ENCODE measurements at regions of chr3 and their contacts with region 1.

Region 1: GRCh38 chr3:48188266-48189201 is at the start of gene CDC25A:
- DNase-seq: peak; percentile 83 to 98 (median 89)
- ATAC-seq: peak; percentile 99
- H3K4me3 ChIP-seq: peak within 1 kb of the TSS; percentile 92
- H3K4me3 Mint-ChIP-seq: peak within 1 kb of the TSS; percentile 93
- H3K27ac ChIP-seq: peak within 1 kb of the TSS in 1 of 2 donors; percentile 48
- H3K27ac Mint-ChIP-seq: peak within 1 kb of the TSS; percentile 35
- H3K4me1 ChIP-seq: peaks cover 18% of the 10 kb centered on the region
- H3K4me1 Mint-ChIP-seq: peaks cover 19% of the 10 kb centered on the region
- H3K27me3 ChIP-seq: peaks cover 0 to 9% of the 10 kb centered on the region in 2 experiments
- H3K27me3 Mint-ChIP-seq: peaks cover 27% of the 10 kb centered on the region
- CTCF ChIP-seq: no peak
- total RNA-seq, gene CDC25A: 0.14 TPM in 1 of 2 experiments, not detected in the other

Region 2: DNA sequence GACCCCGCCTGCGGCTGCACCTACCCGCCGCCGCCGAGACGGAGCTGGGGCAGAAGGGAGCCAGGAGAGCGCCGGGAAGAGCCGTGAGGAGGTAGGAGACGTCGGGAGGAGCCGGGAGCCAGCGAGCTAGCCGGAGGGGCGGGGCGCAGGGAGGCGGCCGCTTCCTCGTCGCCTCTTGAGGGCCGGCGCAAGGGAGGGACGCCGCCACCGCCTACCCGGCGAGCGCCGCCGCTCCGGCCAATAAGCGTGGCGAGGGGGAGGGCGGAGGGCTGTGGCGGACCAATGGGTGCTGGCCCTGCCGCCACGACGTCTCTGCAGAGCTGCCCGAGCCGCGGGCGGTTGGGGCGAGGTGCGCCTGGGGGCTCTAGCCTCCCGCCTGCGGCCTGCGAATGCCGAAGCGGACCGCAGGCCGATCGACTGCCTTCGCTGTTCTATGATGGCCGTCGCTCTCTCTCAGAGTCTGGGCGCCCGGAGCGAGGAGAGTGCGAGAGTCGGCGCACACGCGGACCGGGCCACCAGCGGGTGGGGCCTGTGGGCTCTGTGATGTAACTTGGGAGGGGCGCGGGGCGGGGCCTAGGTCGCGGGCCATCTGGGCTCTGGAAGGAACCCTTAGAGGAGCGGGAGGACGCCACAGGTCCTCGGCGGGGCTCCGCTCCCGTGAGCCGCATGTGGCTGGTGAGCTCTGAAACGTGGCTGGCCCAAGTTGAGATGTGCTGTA is 99.6 kb before region 1 on chr3:
- CTCF ChIA-PET with region 1: no interaction called
- POLR2A ChIA-PET with region 1: no interaction called
- intact Hi-C with region 1: loop called in 1 of 2 experiments (anchors 2 kb)
- DNase-seq: peak; percentile 83 to 97 (median 93)
- ATAC-seq: peak; percentile 90
- H3K4me3 ChIP-seq: peak overlapping the region; percentile 82
- H3K4me3 Mint-ChIP-seq: peak overlapping the region; percentile 97
- H3K27ac ChIP-seq: peak overlapping the region; percentile 80 to 81
- H3K27ac Mint-ChIP-seq: peak overlapping the region; percentile 95
- H3K4me1 ChIP-seq: peaks cover 19% of the 10 kb centered on the region
- H3K4me1 Mint-ChIP-seq: peaks cover 35% of the 10 kb centered on the region
- H3K27me3 ChIP-seq: no peaks in the 10 kb centered on the region
- H3K27me3 Mint-ChIP-seq: no peaks in the 10 kb centered on the region
- CTCF ChIP-seq: no peak

Region 3: DNA sequence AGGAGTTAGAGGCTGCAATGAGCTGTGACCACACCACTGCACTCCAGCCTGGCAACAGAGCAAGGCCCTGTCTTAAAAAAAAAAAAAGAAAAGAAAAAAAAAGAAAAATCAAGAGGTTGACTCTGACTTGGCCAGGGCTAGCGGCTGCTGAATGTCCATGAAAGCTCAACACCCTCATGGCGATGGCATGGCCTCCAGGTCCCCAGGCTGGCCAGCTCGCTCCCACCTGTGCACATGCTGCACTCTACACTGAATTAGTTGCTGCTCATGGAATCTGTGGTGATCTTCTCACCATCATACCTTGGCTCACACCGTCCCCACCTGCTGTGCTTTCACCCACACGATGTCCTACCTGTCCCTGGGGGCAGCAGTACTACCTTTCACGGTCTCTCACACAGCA is 11.4 kb after region 1 on chr3:
- CTCF ChIA-PET with region 1: no interaction called
- POLR2A ChIA-PET with region 1: no interaction called
- intact Hi-C with region 1: no loop called
- DNase-seq: no peak
- ATAC-seq: no peak
- H3K4me3 ChIP-seq: no peak overlapping the region
- H3K4me3 Mint-ChIP-seq: no peak overlapping the region
- H3K27ac ChIP-seq: no peak overlapping the region
- H3K27ac Mint-ChIP-seq: no peak overlapping the region
- H3K4me1 ChIP-seq: no peaks in the 10 kb centered on the region
- H3K4me1 Mint-ChIP-seq: no peaks in the 10 kb centered on the region
- H3K27me3 ChIP-seq: no peaks in the 10 kb centered on the region
- H3K27me3 Mint-ChIP-seq: peaks cover 4% of the 10 kb centered on the region
- CTCF ChIP-seq: no peak

Region 4: GRCh38 chr3:48215466-48215865 is 26.9 kb after region 1 on chr3:
- CTCF ChIA-PET with region 1: no interaction called
- POLR2A ChIA-PET with region 1: no interaction called
- intact Hi-C with region 1: no loop called
- DNase-seq: no peak
- ATAC-seq: no peak
- H3K4me3 ChIP-seq: no peak overlapping the region
- H3K4me3 Mint-ChIP-seq: no peak overlapping the region
- H3K27ac ChIP-seq: no peak overlapping the region
- H3K27ac Mint-ChIP-seq: no peak overlapping the region
- H3K4me1 ChIP-seq: no peaks in the 10 kb centered on the region
- H3K4me1 Mint-ChIP-seq: no peaks in the 10 kb centered on the region
- H3K27me3 ChIP-seq: no peaks in the 10 kb centered on the region
- H3K27me3 Mint-ChIP-seq: no peaks in the 10 kb centered on the region
- CTCF ChIP-seq: no peak

Region 5: DNA sequence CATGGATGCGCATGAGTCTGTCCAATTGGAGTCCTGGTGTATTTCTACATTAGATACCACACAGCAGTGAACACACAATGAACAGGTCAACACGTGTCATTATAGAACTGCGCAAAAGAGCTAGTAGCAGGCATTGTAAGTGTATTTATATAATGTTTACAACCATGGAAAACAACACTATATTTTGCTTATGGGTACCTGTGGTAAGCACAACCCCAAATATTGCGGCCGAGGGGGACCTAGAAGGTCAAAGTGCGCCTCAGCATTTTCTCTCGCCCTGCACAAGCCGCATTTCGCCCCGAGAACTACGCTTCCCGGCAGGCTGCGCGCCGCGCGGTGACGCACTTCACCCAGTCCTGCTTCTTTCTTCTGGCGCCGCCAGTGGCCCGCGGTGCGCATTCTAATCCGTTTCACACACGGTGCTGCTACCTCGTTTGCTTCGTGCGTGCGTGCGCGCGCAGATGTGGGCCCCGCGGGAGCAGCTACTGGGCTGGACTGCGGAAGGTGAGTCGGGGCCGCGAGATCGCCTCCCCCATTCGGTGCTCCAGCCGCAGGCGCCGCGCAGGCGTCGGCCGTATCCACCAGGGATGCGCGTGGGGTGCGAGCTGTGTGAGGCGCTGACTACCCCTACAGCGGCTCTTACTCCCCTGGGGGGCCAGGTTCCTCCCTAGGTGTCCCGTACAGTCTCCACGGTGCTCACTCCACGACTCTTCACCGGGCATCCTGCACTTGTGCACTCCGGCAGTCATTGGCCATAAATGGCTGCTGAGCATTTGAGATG is 52.4 kb after region 1 on chr3 and contains the start of gene ZNF589:
- CTCF ChIA-PET with region 1: interaction called, 8 read pairs
- POLR2A ChIA-PET with region 1: interaction called, 3 read pairs
- intact Hi-C with region 1: loop called (anchors 1 to 10 kb)
- DNase-seq: peak; percentile 89 to 98 (median 94)
- ATAC-seq: peak; percentile 98
- H3K4me3 ChIP-seq: peak within 1 kb of the TSS; percentile 93
- H3K4me3 Mint-ChIP-seq: peak within 1 kb of the TSS; percentile 93
- H3K27ac ChIP-seq: peak within 1 kb of the TSS; percentile 85
- H3K27ac Mint-ChIP-seq: peak within 1 kb of the TSS; percentile 92
- H3K4me1 ChIP-seq: peaks cover 33% of the 10 kb centered on the region
- H3K4me1 Mint-ChIP-seq: peaks cover 23% of the 10 kb centered on the region
- H3K27me3 ChIP-seq: no peaks in the 10 kb centered on the region
- H3K27me3 Mint-ChIP-seq: no peaks in the 10 kb centered on the region
- CTCF ChIP-seq: no peak
- total RNA-seq, gene ZNF589: 18.3 to 20.5 TPM

Region 6: DNA sequence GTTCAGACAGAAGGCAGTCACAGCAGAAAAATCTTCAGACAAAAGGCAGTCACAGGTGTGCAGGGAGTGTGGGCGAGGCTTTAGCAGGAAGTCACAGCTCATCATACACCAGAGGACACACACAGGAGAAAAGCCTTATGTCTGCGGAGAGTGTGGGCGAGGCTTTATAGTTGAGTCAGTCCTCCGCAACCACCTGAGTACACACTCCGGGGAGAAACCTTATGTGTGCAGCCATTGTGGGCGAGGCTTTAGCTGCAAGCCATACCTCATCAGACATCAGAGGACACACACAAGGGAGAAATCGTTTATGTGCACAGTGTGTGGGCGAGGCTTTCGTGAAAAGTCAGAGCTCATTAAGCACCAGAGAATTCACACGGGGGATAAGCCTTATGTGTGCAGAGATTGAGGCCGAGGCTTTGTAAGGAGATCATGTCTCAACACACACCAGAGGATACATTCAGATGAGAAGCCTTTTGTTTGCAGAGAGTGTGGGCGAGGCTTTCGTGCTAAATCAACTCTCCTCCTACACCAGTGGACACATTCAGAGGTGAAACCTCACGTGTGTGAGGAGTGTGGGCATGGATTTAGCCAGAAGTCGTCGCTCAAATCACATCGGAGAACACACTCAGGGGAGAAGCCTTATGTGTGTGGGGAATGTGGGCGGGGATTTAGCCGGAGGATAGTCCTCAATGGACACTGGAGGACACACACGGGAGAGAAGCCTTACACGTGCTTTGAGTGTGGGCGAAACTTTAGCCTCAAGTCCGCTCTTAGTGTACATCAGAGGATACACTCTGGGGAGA is 80.0 kb after region 1 on chr3:
- CTCF ChIA-PET with region 1: interaction called, 4 read pairs
- POLR2A ChIA-PET with region 1: no interaction called
- intact Hi-C with region 1: loop called in 1 of 2 experiments (anchors 2 kb)
- DNase-seq: peak; percentile 55 to 90 (median 76)
- ATAC-seq: peak; percentile 95
- H3K4me3 ChIP-seq: peak overlapping the region; percentile 28
- H3K4me3 Mint-ChIP-seq: peak overlapping the region; percentile 74
- H3K27ac ChIP-seq: peak overlapping the region; percentile 57 to 67
- H3K27ac Mint-ChIP-seq: peak overlapping the region; percentile 87
- H3K4me1 ChIP-seq: peaks cover 29% of the 10 kb centered on the region
- H3K4me1 Mint-ChIP-seq: peaks cover 38% of the 10 kb centered on the region
- H3K27me3 ChIP-seq: no peaks in the 10 kb centered on the region
- H3K27me3 Mint-ChIP-seq: no peaks in the 10 kb centered on the region
- CTCF ChIP-seq: no peak

Region 7: DNA sequence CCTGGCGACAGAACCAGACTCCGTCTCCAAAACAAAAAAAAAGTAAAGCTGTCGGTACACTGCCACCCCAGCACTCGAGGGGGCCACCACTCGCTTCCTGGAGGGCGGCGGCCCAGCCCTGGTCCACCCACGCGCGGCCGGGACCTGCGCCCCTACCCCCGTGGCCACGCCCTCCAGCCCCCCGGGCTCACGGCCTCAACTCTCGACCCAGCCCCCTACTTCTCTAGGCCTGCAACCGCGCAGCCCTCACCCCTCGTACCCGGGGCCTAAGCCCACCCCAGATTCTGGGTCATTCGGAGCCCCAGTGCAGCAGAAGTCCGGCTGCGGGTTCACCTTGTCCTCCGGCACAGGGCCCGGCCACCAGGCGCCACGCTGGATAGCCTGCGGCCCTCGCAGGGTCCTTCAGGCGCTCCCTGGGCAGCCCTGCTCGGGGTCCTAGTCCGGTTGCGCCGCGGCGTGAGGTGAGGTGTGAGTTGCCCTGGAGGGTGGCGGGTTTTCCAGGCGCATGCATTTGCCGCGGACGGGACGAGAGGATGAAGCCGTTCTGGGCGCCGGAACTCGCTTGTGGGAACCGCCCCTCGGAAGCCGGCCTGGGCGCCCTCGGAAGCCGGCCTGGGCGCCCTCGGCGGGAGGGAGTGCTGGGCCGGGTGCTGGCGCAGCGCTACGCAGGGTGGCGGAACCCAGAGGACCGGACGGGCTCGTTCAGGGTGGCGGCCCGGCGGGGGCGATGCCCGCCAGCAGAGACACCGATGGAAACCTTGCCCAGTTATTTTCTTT is 112.7 kb after region 1 on chr3:
- CTCF ChIA-PET with region 1: no interaction called
- POLR2A ChIA-PET with region 1: no interaction called
- intact Hi-C with region 1: loop called in 1 of 2 experiments (anchors 2 kb)
- DNase-seq: peak; percentile 75 to 94 (median 89)
- ATAC-seq: peak; percentile 82
- H3K4me3 ChIP-seq: peak within 1 kb of the TSS; percentile 87
- H3K4me3 Mint-ChIP-seq: peak within 1 kb of the TSS; percentile 93
- H3K27ac ChIP-seq: peak within 1 kb of the TSS; percentile 84
- H3K27ac Mint-ChIP-seq: peak within 1 kb of the TSS; percentile 86
- H3K4me1 ChIP-seq: peaks cover 21% of the 10 kb centered on the region
- H3K4me1 Mint-ChIP-seq: peaks cover 48% of the 10 kb centered on the region
- H3K27me3 ChIP-seq: no peaks in the 10 kb centered on the region
- H3K27me3 Mint-ChIP-seq: no peaks in the 10 kb centered on the region
- CTCF ChIP-seq: no peak

Measured in CD4-positive, alpha-beta T cell (primary cell).